ENCODE measurements at regions of chr6 and their contacts with region 1.

Region 1: DNA sequence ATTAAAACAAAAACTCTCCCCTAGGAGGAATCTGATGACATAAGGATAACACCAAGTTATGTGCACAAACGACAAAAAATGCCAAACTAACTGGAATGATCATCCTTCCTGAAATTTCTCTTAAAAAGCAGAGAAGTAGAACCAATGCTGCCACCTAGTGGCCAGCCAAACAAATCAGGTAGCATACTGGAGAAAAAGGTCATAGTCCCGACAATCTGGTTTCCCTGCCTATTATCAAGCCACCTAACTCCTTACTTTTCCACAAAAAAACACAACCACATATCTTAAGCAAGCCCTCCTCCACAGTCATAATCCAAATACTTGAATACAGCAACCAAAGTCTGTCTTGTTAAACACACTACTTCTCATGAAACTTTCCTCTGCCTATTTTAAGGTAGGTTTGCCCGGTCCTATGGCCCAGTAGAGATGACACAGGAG is 5.3 kb downstream of the OARD1 start:
- DNase-seq: no peak
- ATAC-seq: no peak
- H3K4me3 Mint-ChIP-seq: no peak overlapping the region
- H3K27ac Mint-ChIP-seq: peak overlapping the region; percentile 12
- H3K4me1 Mint-ChIP-seq: peaks cover 19% of the 10 kb centered on the region
- H3K27me3 Mint-ChIP-seq: no peaks in the 10 kb centered on the region
- CTCF ChIP-seq: no peak

Region 2: DNA sequence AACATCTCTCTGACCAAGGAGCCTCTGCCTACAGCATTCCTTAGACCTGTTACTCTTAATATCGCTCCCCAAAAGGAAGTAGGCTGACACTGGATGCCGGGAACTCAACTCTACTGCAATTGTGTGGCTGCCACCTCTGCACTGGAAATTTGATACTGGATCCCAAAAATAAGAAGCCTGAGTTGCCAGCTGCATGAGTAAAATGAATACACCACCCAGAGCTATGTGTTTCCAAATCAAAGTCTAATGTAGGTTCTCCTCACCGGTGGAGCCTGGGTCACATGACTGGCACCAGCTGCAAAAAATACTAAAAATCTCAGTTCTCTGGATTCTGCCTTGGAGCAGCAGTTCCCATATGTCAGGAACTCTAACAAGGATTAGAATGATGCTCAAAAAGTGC is 64.7 kb before region 1 on chr6:
- CTCF ChIA-PET with region 1: no interaction called
- POLR2A ChIA-PET with region 1: no interaction called
- intact Hi-C with region 1: loop called (anchors 1 kb)
- DNase-seq: no peak
- ATAC-seq: no peak
- H3K4me3 Mint-ChIP-seq: no peak overlapping the region
- H3K27ac Mint-ChIP-seq: no peak overlapping the region
- H3K4me1 Mint-ChIP-seq: no peaks in the 10 kb centered on the region
- H3K27me3 Mint-ChIP-seq: peaks cover 27% of the 10 kb centered on the region
- CTCF ChIP-seq: no peak

Region 3: GRCh38 chr6:41040940-41041587 is 25.8 kb before region 1 on chr6:
- CTCF ChIA-PET with region 1: no interaction called
- POLR2A ChIA-PET with region 1: no interaction called
- intact Hi-C with region 1: no loop called
- DNase-seq: no peak
- ATAC-seq: no peak
- H3K4me3 Mint-ChIP-seq: no peak overlapping the region
- H3K27ac Mint-ChIP-seq: no peak overlapping the region
- H3K4me1 Mint-ChIP-seq: no peaks in the 10 kb centered on the region
- H3K27me3 Mint-ChIP-seq: no peaks in the 10 kb centered on the region
- CTCF ChIP-seq: no peak

Region 4: DNA sequence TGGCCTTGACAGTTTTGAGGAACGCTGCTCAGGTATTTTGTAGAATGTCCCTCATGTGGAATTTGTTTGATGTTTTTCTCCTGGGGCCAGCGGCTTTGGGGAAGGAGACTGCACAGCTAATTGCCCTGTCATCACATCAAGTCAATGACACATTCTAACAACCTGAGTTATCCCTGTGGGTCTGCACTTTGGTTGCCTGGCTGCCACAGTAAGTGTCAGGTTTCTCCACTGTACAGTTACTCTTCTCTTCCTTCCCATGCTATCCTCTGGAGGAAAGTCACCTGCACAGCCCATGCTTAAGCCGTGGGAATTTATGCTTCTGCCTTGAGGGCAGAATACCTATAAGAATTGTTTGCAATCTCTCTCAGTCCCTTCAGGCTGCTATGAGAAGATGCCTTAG is 159.9 kb after region 1 on chr6:
- CTCF ChIA-PET with region 1: no interaction called
- POLR2A ChIA-PET with region 1: no interaction called
- intact Hi-C with region 1: no loop called
- DNase-seq: no peak
- ATAC-seq: no peak
- H3K4me3 Mint-ChIP-seq: no peak overlapping the region
- H3K27ac Mint-ChIP-seq: no peak overlapping the region
- H3K4me1 Mint-ChIP-seq: peaks cover 7% of the 10 kb centered on the region
- H3K27me3 Mint-ChIP-seq: peaks cover 13% of the 10 kb centered on the region
- CTCF ChIP-seq: no peak

Region 5: GRCh38 chr6:41872147-41872546 is 805.3 kb after region 1 on chr6:
- CTCF ChIA-PET with region 1: no interaction called
- POLR2A ChIA-PET with region 1: no interaction called
- intact Hi-C with region 1: no loop called
- DNase-seq: no peak
- ATAC-seq: no peak
- H3K4me3 Mint-ChIP-seq: no peak overlapping the region
- H3K27ac Mint-ChIP-seq: no peak overlapping the region
- H3K4me1 Mint-ChIP-seq: peaks cover 42% of the 10 kb centered on the region
- H3K27me3 Mint-ChIP-seq: no peaks in the 10 kb centered on the region
- CTCF ChIP-seq: no peak

Measured in activated B cell treated with CpG ODN at 0.5 μM for 24 hours (primary cell).